Breast epithelium (tissue), 4 donors: ENCODE measurements at regions of chr11 and their contacts with region 1.

Region 1: DNA sequence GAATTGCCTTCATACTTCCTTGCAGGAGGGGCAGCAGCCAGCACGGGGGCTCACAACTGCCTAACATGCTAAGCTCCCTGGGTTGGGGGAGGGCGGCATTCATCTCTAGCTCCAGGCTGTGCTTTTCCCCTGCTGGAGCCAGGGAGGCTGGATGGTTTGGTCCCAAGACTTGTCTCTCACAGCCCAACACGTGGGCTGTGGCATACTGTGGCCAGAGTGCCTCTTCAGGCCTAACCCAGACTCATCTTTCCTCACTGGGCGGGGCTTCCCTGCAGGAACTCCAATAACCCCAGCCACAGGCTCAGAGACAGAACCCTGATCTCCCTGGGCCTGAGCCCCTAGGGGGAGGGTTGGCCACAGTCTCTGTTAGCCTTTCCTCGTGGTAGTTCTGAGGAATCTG is 121.9 kb upstream of the PLET1 start:
- DNase-seq: no peak
- H3K4me3 ChIP-seq: no peak overlapping the region
- H3K27ac ChIP-seq: no peak overlapping the region
- H3K4me1 ChIP-seq: no peaks in the 10 kb centered on the region
- H3K27me3 ChIP-seq: no peaks in the 10 kb centered on the region
- CTCF ChIP-seq: no peak
- POLR2A ChIP-seq: no peak

Region 2: GRCh38 chr11:112345708-112346107 is 36.9 kb before region 1 on chr11:
- intact Hi-C with region 1: loop called (anchors 2 kb)
- DNase-seq: no peak
- H3K4me3 ChIP-seq: no peak overlapping the region
- H3K27ac ChIP-seq: no peak overlapping the region
- H3K4me1 ChIP-seq: no peaks in the 10 kb centered on the region
- H3K27me3 ChIP-seq: no peaks in the 10 kb centered on the region
- CTCF ChIP-seq: no peak
- POLR2A ChIP-seq: no peak